Activated naive CD4-positive, alpha-beta T cell treated with anti-CD3 and anti-CD28 coated beads for 36 hours (primary cell): ENCODE measurements at regions of chr2 and their contacts with region 1.

Region 1: DNA sequence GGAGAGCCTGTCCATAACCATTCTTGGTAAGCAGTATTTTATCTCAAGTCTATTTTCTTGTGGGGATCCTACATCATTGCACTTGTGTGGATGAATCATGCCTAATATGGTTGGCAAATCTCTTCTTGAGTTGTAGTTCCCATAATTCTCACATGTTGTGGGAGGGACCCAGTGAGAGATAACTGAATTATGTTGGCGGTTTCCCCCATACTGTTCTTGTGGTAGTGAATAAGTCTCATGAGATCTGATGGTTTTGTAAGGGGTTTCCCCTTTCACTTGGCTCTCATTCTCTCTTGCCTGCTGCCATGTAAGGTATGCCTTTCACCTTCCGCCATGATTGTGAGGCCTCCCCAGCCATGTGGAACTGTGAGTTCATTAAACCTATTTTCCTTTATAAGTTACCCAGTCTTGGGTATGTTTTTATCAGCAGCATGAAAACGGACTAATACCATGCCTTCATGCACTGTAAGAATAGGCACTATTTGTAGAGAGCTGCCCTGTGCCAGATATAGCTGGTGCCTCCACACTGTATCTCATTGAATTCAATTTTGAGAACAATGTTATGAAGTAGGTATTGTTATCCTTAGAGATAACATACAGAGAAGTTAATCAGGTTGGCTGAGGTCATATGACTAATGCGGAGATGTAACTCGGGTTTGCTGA is 148.3 kb downstream of the PLCL1 start:
- DNase-seq: peak; percentile 51
- H3K4me3 Mint-ChIP-seq: no peak overlapping the region
- H3K27ac Mint-ChIP-seq: peak overlapping the region; percentile 9
- H3K4me1 Mint-ChIP-seq: peaks cover 79% of the 10 kb centered on the region
- H3K27me3 Mint-ChIP-seq: no peaks in the 10 kb centered on the region

Region 2: GRCh38 chr2:197931661-197932312 is 20.9 kb before region 1 on chr2:
- CTCF ChIA-PET with region 1: no interaction called
- intact Hi-C with region 1: loop called (anchors 1 kb)
- DNase-seq: no peak
- H3K4me3 Mint-ChIP-seq: no peak overlapping the region
- H3K27ac Mint-ChIP-seq: no peak overlapping the region
- H3K4me1 Mint-ChIP-seq: peaks cover 59% of the 10 kb centered on the region
- H3K27me3 Mint-ChIP-seq: no peaks in the 10 kb centered on the region

Region 3: GRCh38 chr2:197941715-197942114 is 11.0 kb before region 1 on chr2:
- CTCF ChIA-PET with region 1: interaction called, 3 read pairs
- intact Hi-C with region 1: loop called (anchors 1 kb)
- DNase-seq: no peak
- H3K4me3 Mint-ChIP-seq: no peak overlapping the region
- H3K27ac Mint-ChIP-seq: no peak overlapping the region
- H3K4me1 Mint-ChIP-seq: peaks cover 64% of the 10 kb centered on the region
- H3K27me3 Mint-ChIP-seq: no peaks in the 10 kb centered on the region

Region 4: DNA sequence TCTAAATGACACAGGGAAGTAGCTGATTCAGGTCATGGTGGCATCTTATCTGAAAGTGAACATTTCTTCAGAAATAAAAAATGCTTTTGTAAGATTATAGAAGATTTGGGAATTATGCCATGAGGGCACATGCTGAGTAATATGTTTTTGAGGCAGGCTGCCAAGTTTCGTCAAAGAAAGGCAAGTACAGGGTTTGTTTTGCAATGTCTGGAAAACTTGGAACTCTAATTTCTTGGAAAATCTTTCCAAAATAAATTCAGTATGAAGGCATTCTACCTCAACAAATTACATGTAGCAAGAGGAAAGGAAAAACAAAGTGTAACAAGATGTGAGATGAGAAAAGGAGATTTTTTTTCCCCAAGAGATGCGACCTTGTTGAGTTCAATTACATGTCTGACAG is 19.4 kb after region 1 on chr2:
- CTCF ChIA-PET with region 1: interaction called, 3 read pairs
- intact Hi-C with region 1: loop called (anchors 1 kb)
- DNase-seq: no peak
- H3K4me3 Mint-ChIP-seq: no peak overlapping the region
- H3K27ac Mint-ChIP-seq: no peak overlapping the region
- H3K4me1 Mint-ChIP-seq: peaks cover 43% of the 10 kb centered on the region
- H3K27me3 Mint-ChIP-seq: no peaks in the 10 kb centered on the region

Region 5: DNA sequence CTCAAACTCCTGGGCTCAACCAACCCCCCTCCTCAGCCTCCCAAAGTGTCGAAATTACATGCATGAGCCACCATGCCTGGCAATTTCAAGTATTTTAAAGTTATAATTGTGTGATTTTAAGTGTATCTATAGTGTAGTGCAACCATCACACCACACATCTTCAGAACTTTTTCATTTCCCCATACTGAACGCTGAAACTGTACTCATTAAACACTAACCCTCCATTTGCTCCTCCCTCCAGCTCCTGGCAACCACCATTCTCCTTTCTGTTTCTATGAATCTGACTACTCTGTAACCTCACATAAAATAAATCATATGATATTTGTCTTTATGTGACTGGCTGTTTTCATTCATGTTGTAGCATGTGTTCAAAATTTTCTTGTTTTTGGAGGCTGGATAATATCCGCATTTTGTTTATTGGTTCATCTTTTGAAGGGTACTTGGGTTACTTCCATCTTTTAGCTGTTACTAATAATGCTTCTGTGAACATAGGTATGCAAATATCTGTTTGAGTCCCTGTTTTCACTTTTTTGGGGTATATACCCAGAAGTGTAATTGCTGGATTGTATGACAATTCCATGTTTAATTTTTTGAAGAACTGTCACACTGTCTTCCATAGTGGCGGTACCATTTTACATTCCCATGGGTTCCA is 39.9 kb after region 1 on chr2:
- CTCF ChIA-PET with region 1: no interaction called
- intact Hi-C with region 1: no loop called
- DNase-seq: no peak
- H3K4me3 Mint-ChIP-seq: no peak overlapping the region
- H3K27ac Mint-ChIP-seq: no peak overlapping the region
- H3K4me1 Mint-ChIP-seq: peaks cover 59% of the 10 kb centered on the region
- H3K27me3 Mint-ChIP-seq: no peaks in the 10 kb centered on the region

Region 6: GRCh38 chr2:198080879-198081765 is 128.5 kb after region 1 on chr2:
- CTCF ChIA-PET with region 1: no interaction called
- intact Hi-C with region 1: no loop called
- DNase-seq: no peak
- H3K4me3 Mint-ChIP-seq: no peak overlapping the region
- H3K27ac Mint-ChIP-seq: no peak overlapping the region
- H3K4me1 Mint-ChIP-seq: peaks cover 14% of the 10 kb centered on the region
- H3K27me3 Mint-ChIP-seq: no peaks in the 10 kb centered on the region